ENCODE measurements at regions of chr5 and their contacts with region 1.

Region 1: GRCh38 chr5:134586866-134587524 is 45.6 kb downstream of the SAR1B start:
- DNase-seq: peak; percentile 93
- ATAC-seq: peak; percentile 92
- H3K4me3 Mint-ChIP-seq: no peak overlapping the region
- H3K27ac Mint-ChIP-seq: peak overlapping the region; percentile 43
- H3K4me1 Mint-ChIP-seq: peaks cover 9% of the 10 kb centered on the region
- H3K27me3 Mint-ChIP-seq: no peaks in the 10 kb centered on the region
- CTCF ChIP-seq: peak; percentile 97

Region 2: GRCh38 chr5:134327327-134327726 is 259.7 kb before region 1 on chr5:
- CTCF ChIA-PET with region 1: interaction called, 10 read pairs
- POLR2A ChIA-PET with region 1: no interaction called
- intact Hi-C with region 1: no loop called
- DNase-seq: no peak
- ATAC-seq: no peak
- H3K4me3 Mint-ChIP-seq: no peak overlapping the region
- H3K27ac Mint-ChIP-seq: no peak overlapping the region
- H3K4me1 Mint-ChIP-seq: no peaks in the 10 kb centered on the region
- H3K27me3 Mint-ChIP-seq: no peaks in the 10 kb centered on the region
- CTCF ChIP-seq: no peak

Region 3: GRCh38 chr5:134394932-134395331 is 192.1 kb before region 1 on chr5:
- CTCF ChIA-PET with region 1: interaction called, 7 read pairs
- POLR2A ChIA-PET with region 1: no interaction called
- intact Hi-C with region 1: loop called (anchors 10 kb)
- DNase-seq: no peak
- ATAC-seq: no peak
- H3K4me3 Mint-ChIP-seq: no peak overlapping the region
- H3K27ac Mint-ChIP-seq: no peak overlapping the region
- H3K4me1 Mint-ChIP-seq: peaks cover 11% of the 10 kb centered on the region
- H3K27me3 Mint-ChIP-seq: no peaks in the 10 kb centered on the region
- CTCF ChIP-seq: no peak

Region 4: DNA sequence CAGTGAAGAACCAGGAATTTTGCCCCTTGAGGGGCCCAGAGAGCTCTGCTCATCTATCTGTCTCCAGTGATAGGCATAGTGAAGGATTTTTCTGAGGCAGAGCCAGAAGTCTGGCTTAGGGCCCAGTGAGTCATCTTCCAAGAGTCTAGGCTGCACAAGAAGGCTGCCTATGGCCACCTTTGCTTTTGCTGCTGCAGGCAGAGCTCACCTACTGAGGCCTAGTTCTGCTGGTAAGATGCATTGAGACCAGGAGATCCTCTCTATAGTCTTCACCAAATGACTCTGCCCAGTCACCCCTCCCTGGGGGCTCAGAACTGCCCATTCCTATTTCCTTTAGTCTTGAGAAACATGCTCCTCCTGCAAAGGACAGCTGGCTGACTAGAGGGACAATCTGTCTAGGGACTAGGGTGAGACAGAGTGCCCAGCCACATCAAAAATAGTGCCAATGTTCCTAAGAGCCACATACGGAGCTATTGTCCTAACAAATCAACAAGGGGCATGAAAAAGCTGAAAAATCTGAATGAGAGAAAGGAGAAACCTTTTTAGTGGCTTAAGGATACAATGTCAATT is 135.0 kb before region 1 on chr5:
- CTCF ChIA-PET with region 1: no interaction called
- POLR2A ChIA-PET with region 1: no interaction called
- intact Hi-C with region 1: no loop called
- DNase-seq: no peak
- ATAC-seq: no peak
- H3K4me3 Mint-ChIP-seq: no peak overlapping the region
- H3K27ac Mint-ChIP-seq: no peak overlapping the region
- H3K4me1 Mint-ChIP-seq: peaks cover 4% of the 10 kb centered on the region
- H3K27me3 Mint-ChIP-seq: no peaks in the 10 kb centered on the region
- CTCF ChIP-seq: no peak

Region 5: GRCh38 chr5:134533115-134533815 is 53.7 kb before region 1 on chr5:
- CTCF ChIA-PET with region 1: interaction called, 11 read pairs
- POLR2A ChIA-PET with region 1: interaction called, 5 read pairs
- intact Hi-C with region 1: no loop called
- DNase-seq: no peak
- ATAC-seq: no peak
- H3K4me3 Mint-ChIP-seq: no peak overlapping the region
- H3K27ac Mint-ChIP-seq: peak overlapping the region; percentile 48
- H3K4me1 Mint-ChIP-seq: peaks cover 95% of the 10 kb centered on the region
- H3K27me3 Mint-ChIP-seq: no peaks in the 10 kb centered on the region
- CTCF ChIP-seq: no peak

Region 6: DNA sequence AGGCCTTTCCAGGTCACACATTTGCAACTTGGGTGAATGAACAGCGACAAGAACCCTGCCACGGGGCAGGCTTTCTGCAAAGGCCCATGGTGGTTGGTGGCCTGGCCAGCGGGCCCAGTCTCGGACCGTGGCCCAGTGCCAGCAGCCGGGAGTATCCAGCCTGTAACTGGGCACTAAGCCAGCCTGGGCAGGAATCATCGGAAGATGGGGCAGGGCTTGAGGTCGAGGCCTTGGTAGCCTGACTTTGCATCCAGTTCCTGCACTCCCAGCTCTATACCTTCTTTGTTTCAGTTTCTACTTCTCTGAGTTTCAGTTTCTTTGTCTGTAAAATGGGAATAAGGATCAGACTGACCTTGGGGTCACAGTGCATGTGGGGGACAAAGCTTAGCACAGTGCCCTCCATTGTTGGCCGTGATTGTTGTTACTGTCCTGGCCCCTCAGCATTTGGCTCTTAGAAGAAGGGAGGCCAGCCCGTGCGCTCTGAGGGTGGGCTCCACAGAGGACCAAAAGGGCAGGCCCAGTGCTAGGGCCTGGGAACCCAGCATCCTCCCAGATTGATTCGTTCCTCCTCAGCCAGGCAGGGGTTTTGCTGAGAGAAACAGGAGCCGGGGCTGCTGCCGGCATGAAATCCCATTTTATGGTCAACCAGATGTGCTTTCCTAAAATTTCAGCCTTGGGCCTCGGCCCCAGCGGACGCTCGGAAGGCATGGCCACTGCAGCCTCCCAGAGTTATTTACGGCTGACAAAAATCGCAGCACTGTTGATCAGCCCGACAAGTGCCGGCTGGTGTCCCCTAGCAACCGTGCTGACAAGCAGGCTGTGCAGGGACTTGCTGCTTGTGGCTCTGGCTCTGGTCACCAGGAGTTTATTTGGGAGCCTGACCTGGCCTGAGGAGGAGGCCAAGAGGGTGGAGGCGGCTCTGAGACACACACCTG is 18.0 kb before region 1 on chr5:
- CTCF ChIA-PET with region 1: interaction called, 12 read pairs
- POLR2A ChIA-PET with region 1: no interaction called
- intact Hi-C with region 1: no loop called
- DNase-seq: no peak
- ATAC-seq: no peak
- H3K4me3 Mint-ChIP-seq: no peak overlapping the region
- H3K27ac Mint-ChIP-seq: peak overlapping the region; percentile 83
- H3K4me1 Mint-ChIP-seq: peaks cover 8% of the 10 kb centered on the region
- H3K27me3 Mint-ChIP-seq: no peaks in the 10 kb centered on the region
- CTCF ChIP-seq: no peak

Region 7: DNA sequence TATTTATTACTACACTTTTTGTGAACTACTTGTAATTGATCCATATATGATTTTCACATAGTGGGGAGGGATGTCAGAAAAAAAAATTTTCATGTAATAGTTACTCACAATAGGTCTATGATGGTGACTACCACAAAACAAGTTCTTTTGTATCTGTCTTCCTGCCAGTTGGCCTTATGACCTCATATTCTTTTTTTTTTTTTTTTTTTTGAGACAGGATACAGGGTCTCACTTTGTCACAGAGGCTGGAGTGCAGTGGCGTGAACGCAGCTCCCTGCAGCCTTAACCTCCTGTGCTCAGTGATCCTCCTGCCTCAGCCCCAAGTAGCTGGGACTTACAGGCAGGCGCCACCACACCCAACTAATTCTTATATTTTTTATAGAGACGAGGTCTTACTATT is 72.5 kb after region 1 on chr5:
- CTCF ChIA-PET with region 1: interaction called, 10 read pairs
- POLR2A ChIA-PET with region 1: interaction called, 4 read pairs
- intact Hi-C with region 1: no loop called
- DNase-seq: no peak
- ATAC-seq: peak; percentile 51
- H3K4me3 Mint-ChIP-seq: no peak overlapping the region
- H3K27ac Mint-ChIP-seq: no peak overlapping the region
- H3K4me1 Mint-ChIP-seq: peaks cover 25% of the 10 kb centered on the region
- H3K27me3 Mint-ChIP-seq: no peaks in the 10 kb centered on the region
- CTCF ChIP-seq: no peak

Measured in activated CD8-positive, alpha-beta T cell treated with anti-CD3 and anti-CD28 coated beads for 36 hours (primary cell).